B cell (primary cell): ENCODE measurements at regions of chr2 and their contacts with region 1.

Region 1: GRCh38 chr2:112749755-112750559 is 14.5 kb downstream of the CKAP2L start:
- DNase-seq: peak; percentile 82
- ATAC-seq: peak; percentile 93
- H3K4me3 ChIP-seq: no peak overlapping the region
- H3K4me3 Mint-ChIP-seq: no peak overlapping the region
- H3K27ac ChIP-seq: no peak overlapping the region
- H3K27ac Mint-ChIP-seq: peak overlapping the region; percentile 21
- H3K4me1 ChIP-seq: peaks cover 0 to 11% of the 10 kb centered on the region in 2 donors
- H3K4me1 Mint-ChIP-seq: peaks cover 13% of the 10 kb centered on the region
- H3K27me3 ChIP-seq: no peaks in the 10 kb centered on the region
- H3K27me3 Mint-ChIP-seq: no peaks in the 10 kb centered on the region
- CTCF ChIP-seq: peak; percentile 96

Region 2: GRCh38 chr2:112764071-112765044 is 14.4 kb after region 1 on chr2 and contains the start of gene CKAP2L:
- CTCF ChIA-PET with region 1: interaction called, 16 read pairs
- POLR2A ChIA-PET with region 1: no interaction called
- intact Hi-C with region 1: no loop called
- DNase-seq: peak; percentile 95
- ATAC-seq: peak; percentile 99
- H3K4me3 ChIP-seq: peak within 1 kb of the TSS; percentile 42 to 96 (median 71)
- H3K4me3 Mint-ChIP-seq: peak within 1 kb of the TSS; percentile 97
- H3K27ac ChIP-seq: peak within 1 kb of the TSS in 1 of 2 donors; percentile 58
- H3K27ac Mint-ChIP-seq: peak within 1 kb of the TSS; percentile 77
- H3K4me1 ChIP-seq: peaks cover 8 to 12% of the 10 kb centered on the region in 2 donors
- H3K4me1 Mint-ChIP-seq: peaks cover 32% of the 10 kb centered on the region
- H3K27me3 ChIP-seq: no peaks in the 10 kb centered on the region
- H3K27me3 Mint-ChIP-seq: no peaks in the 10 kb centered on the region
- CTCF ChIP-seq: no peak
- total RNA-seq, gene CKAP2L: 0.25 TPM in 1 of 2 replicates, not detected in the other

Region 3: GRCh38 chr2:112891385-112891831 is 141.5 kb after region 1 on chr2:
- CTCF ChIA-PET with region 1: interaction called, 299 read pairs
- POLR2A ChIA-PET with region 1: no interaction called
- intact Hi-C with region 1: no loop called
- DNase-seq: no peak
- ATAC-seq: no peak
- H3K4me3 ChIP-seq: no peak overlapping the region
- H3K4me3 Mint-ChIP-seq: no peak overlapping the region
- H3K27ac ChIP-seq: no peak overlapping the region
- H3K27ac Mint-ChIP-seq: no peak overlapping the region
- H3K4me1 ChIP-seq: no peaks in the 10 kb centered on the region
- H3K4me1 Mint-ChIP-seq: no peaks in the 10 kb centered on the region
- H3K27me3 ChIP-seq: no peaks in the 10 kb centered on the region
- H3K27me3 Mint-ChIP-seq: no peaks in the 10 kb centered on the region
- CTCF ChIP-seq: no peak

Region 4: GRCh38 chr2:112958428-112959108 is 208.6 kb after region 1 on chr2:
- CTCF ChIA-PET with region 1: interaction called, 37 read pairs
- POLR2A ChIA-PET with region 1: no interaction called
- intact Hi-C with region 1: loop called (anchors 1 kb)
- DNase-seq: peak; percentile 61
- ATAC-seq: peak; percentile 67
- H3K4me3 ChIP-seq: no peak overlapping the region
- H3K4me3 Mint-ChIP-seq: no peak overlapping the region
- H3K27ac ChIP-seq: no peak overlapping the region
- H3K27ac Mint-ChIP-seq: no peak overlapping the region
- H3K4me1 ChIP-seq: no peaks in the 10 kb centered on the region
- H3K4me1 Mint-ChIP-seq: no peaks in the 10 kb centered on the region
- H3K27me3 ChIP-seq: peaks cover 0 to 15% (median 0%) of the 10 kb centered on the region in 4 experiments
- H3K27me3 Mint-ChIP-seq: peaks cover 4% of the 10 kb centered on the region
- CTCF ChIP-seq: peak; percentile 88